ENCODE measurements at regions of chr14 and their contacts with region 1.

Region 1: GRCh38 chr14:49992901-49993335 is 100.0 kb downstream of the ARF6 start:
- DNase-seq: no peak
- H3K4me3 Mint-ChIP-seq: no peak overlapping the region
- H3K27ac Mint-ChIP-seq: no peak overlapping the region
- H3K4me1 Mint-ChIP-seq: peaks cover 29% of the 10 kb centered on the region
- H3K27me3 Mint-ChIP-seq: no peaks in the 10 kb centered on the region

Region 2: GRCh38 chr14:49971156-49972130 is 21.5 kb before region 1 on chr14:
- CTCF ChIA-PET with region 1: interaction called, 16 read pairs
- POLR2A ChIA-PET with region 1: interaction called, 3 read pairs
- DNase-seq: peak; percentile 79
- H3K4me3 Mint-ChIP-seq: peak overlapping the region; percentile 66
- H3K27ac Mint-ChIP-seq: peak overlapping the region; percentile 98
- H3K4me1 Mint-ChIP-seq: peaks cover 68% of the 10 kb centered on the region
- H3K27me3 Mint-ChIP-seq: no peaks in the 10 kb centered on the region